Tibial artery (tissue), 4 donors: ENCODE measurements at regions of chr17 and their contacts with region 1.

Region 1: GRCh38 chr17:42405963-42406495 is 17.0 kb downstream of the CAVIN1 start:
- DNase-seq: peak; percentile 89 to 91
- H3K4me3 ChIP-seq: no peak overlapping the region
- H3K27ac ChIP-seq: peak overlapping the region; percentile 98 to 100
- H3K4me1 ChIP-seq: peaks cover 12 to 93% (median 76%) of the 10 kb centered on the region in 4 donors
- H3K27me3 ChIP-seq: no peaks in the 10 kb centered on the region
- CTCF ChIP-seq: peak; percentile 82 to 90

Region 2: GRCh38 chr17:42120770-42121769 is 285.0 kb before region 1 on chr17 and contains the start of gene KAT2A:
- intact Hi-C with region 1: no loop called
- DNase-seq: peak; percentile 78 to 83
- H3K4me3 ChIP-seq: peak within 1 kb of the TSS; percentile 76 to 85
- H3K27ac ChIP-seq: peak within 1 kb of the TSS; percentile 43 to 67
- H3K4me1 ChIP-seq: peaks cover 0 to 17% (median 10%) of the 10 kb centered on the region in 4 donors
- H3K27me3 ChIP-seq: no peaks in the 10 kb centered on the region
- CTCF ChIP-seq: no peak

Region 3: DNA sequence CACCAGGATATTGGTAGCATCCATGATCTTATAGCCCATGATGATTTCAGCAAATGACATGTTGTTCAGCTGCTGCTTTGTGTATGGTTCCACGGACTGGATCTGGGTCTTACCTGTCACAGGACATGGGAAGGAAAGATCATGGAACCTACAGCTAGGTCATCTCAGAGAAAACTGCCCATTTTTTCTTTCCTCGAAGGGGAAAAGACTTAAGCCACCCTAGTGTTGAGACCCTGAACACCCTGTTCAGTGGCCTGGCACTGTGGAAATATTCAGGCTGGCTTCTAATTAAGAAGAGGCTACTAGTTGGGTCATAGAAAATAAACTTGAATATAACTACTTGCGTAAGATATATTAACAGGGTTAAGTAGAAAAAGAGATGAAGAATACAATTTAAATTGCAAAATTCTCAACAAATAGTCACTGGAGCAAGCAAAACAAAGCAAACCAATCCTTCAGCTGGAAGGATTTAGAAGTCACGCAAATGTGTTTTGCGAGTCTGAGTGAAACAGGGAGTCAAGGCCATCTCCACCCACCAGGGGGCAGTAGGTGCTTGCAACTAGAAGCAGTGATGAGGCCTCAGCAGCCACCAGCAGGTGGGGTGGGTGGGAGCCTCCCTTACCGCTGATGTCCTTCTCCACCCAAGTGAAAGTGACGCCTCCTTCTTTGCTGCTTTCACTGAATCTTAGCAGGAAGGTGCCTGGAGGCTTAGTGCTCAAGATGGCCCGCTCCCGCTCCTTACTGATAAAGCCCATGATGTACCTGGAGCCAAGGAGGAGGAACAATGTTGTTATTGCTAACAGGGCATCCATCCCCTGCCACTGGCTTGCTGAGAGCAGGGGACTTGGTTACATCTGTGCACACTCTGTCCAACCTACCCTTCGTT is 83.4 kb before region 1 on chr17:
- intact Hi-C with region 1: loop called (anchors 2 kb)
- DNase-seq: peak; percentile 94 to 97
- H3K4me3 ChIP-seq: no peak overlapping the region
- H3K27ac ChIP-seq: peak overlapping the region; percentile 35 to 58
- H3K4me1 ChIP-seq: peaks cover 0 to 38% (median 11%) of the 10 kb centered on the region in 4 donors
- H3K27me3 ChIP-seq: no peaks in the 10 kb centered on the region
- CTCF ChIP-seq: peak; percentile 97 to 100